ENCODE measurements at regions of chr22 and their contacts with region 1.

Region 1: GRCh38 chr22:35766654-35767580 is 49.2 kb downstream of the APOL5 start:
- DNase-seq: no peak
- ATAC-seq: peak; percentile 63
- H3K4me3 ChIP-seq: no peak overlapping the region; the same call in 1 of the 2 replicates
- H3K27ac ChIP-seq: no peak overlapping the region
- H3K4me1 ChIP-seq: no peaks in the 10 kb centered on the region; the same call in 1 of the 2 replicates
- H3K27me3 ChIP-seq: no peaks in the 10 kb centered on the region
- CTCF ChIP-seq: no peak
- POLR2A ChIP-seq: no peak
- RAD21 ChIP-seq: no peak

Region 2: GRCh38 chr22:35337932-35338331 is 429.0 kb before region 1 on chr22:
- CTCF ChIA-PET with region 1: no interaction called
- POLR2A ChIA-PET with region 1: no interaction called
- dilution Hi-C with region 1: no loop called
- in situ Hi-C with region 1: no loop called
- intact Hi-C with region 1: no loop called
- DNase-seq: no peak
- ATAC-seq: no peak
- H3K4me3 ChIP-seq: no peak overlapping the region
- H3K27ac ChIP-seq: no peak overlapping the region
- H3K4me1 ChIP-seq: no peaks in the 10 kb centered on the region
- H3K27me3 ChIP-seq: no peaks in the 10 kb centered on the region
- CTCF ChIP-seq: no peak
- POLR2A ChIP-seq: no peak
- RAD21 ChIP-seq: no peak

Region 3: GRCh38 chr22:35921777-35922176 is 154.9 kb after region 1 on chr22:
- CTCF ChIA-PET with region 1: no interaction called
- POLR2A ChIA-PET with region 1: no interaction called
- dilution Hi-C with region 1: no loop called
- in situ Hi-C with region 1: no loop called
- intact Hi-C with region 1: loop called (anchors 5 kb)
- DNase-seq: peak; percentile 90
- ATAC-seq: peak; percentile 94
- H3K4me3 ChIP-seq: no peak overlapping the region
- H3K27ac ChIP-seq: no peak overlapping the region
- H3K4me1 ChIP-seq: peaks cover 6% of the 10 kb centered on the region
- H3K27me3 ChIP-seq: no peaks in the 10 kb centered on the region
- CTCF ChIP-seq: peak; percentile 80
- POLR2A ChIP-seq: no peak
- RAD21 ChIP-seq: peak; percentile 93

Measured in IMR-90 (cell line).